H1 (cell line): ENCODE measurements at regions of chr1 and their contacts with region 1.

Region 1: GRCh38 chr1:64136752-64137411 is 66.5 kb upstream of the UBE2U start:
- DNase-seq: peak; percentile 49 to 93
- H3K4me3 ChIP-seq: no peak overlapping the region
- H3K27ac ChIP-seq: no peak overlapping the region
- H3K4me1 ChIP-seq: no peaks in the 10 kb centered on the region
- H3K27me3 ChIP-seq: no peaks in the 10 kb centered on the region
- CTCF ChIP-seq: peak; percentile 57 to 92 (median 72)
- EP300 ChIP-seq: no peak
- POLR2A ChIP-seq: no peak
- RAD21 ChIP-seq: peak; percentile 87 to 90

Region 2: DNA sequence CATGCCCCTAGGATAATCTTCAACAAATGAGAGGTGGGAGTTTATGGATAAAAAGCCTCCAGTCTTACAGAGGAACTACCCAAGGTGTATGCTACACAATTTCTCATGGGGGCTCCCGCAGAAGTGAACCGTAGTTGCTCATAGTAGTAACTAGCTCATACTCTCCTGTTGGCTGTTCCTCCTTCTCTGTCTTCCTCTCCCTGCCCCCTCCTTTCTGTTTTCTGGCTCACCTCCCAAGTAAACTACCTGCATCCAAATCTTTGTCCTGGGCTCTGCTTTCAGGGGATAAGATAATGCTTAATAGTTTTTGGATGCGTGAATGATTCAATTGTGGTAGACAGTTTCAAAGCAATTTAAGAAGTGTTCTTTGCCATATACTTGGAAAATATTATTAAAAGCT is 453.1 kb before region 1 on chr1:
- CTCF ChIA-PET with region 1: interaction called, 14 read pairs
- POLR2A ChIA-PET with region 1: no interaction called
- DNase-seq: no peak
- H3K4me3 ChIP-seq: no peak overlapping the region
- H3K27ac ChIP-seq: no peak overlapping the region
- H3K4me1 ChIP-seq: peaks cover 0 to 4% (median 0%) of the 10 kb centered on the region in 4 experiments; a peak in 3 of 7 replicates
- H3K27me3 ChIP-seq: no peaks in the 10 kb centered on the region
- CTCF ChIP-seq: no peak
- EP300 ChIP-seq: no peak
- POLR2A ChIP-seq: no peak
- RAD21 ChIP-seq: no peak

Region 3: DNA sequence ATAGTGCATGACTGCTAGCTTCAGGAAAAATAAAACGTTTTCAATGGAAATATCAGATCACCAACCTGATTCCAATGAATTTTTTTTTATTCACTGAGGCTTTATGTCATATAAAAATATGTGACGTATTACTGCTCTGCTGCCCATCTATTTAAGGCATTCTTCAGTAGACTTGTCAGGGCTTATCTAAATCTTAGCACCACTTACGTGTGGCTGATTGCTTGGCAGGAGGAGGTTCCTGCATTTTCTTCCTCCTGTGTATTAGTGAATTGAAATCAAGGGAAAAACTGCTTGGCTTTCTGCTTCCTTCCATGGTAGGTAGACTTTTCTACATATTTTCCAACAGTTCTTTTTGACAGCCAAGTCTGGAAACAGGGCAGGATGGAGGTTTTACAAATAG is 282.8 kb before region 1 on chr1:
- CTCF ChIA-PET with region 1: no interaction called
- POLR2A ChIA-PET with region 1: no interaction called
- DNase-seq: no peak
- H3K4me3 ChIP-seq: no peak overlapping the region
- H3K27ac ChIP-seq: 0 out of 2 replicates have a peak overlapping the region, but pooled peaks have one; percentile 2
- H3K4me1 ChIP-seq: peaks cover 3 to 11% (median 8%) of the 10 kb centered on the region in 4 experiments; a peak in 5 of 7 replicates
- H3K27me3 ChIP-seq: no peaks in the 10 kb centered on the region
- CTCF ChIP-seq: no peak
- EP300 ChIP-seq: no peak
- POLR2A ChIP-seq: no peak
- RAD21 ChIP-seq: no peak

Region 4: GRCh38 chr1:63892632-63893395 is 244.1 kb before region 1 on chr1:
- CTCF ChIA-PET with region 1: no interaction called
- POLR2A ChIA-PET with region 1: no interaction called
- DNase-seq: no peak
- H3K4me3 ChIP-seq: no peak overlapping the region
- H3K27ac ChIP-seq: no peak overlapping the region
- H3K4me1 ChIP-seq: peaks cover 0 to 21% (median 4%) of the 10 kb centered on the region in 4 experiments; a peak in 4 of 7 replicates
- H3K27me3 ChIP-seq: no peaks in the 10 kb centered on the region
- CTCF ChIP-seq: no peak
- EP300 ChIP-seq: no peak
- POLR2A ChIP-seq: no peak
- RAD21 ChIP-seq: no peak

Region 5: GRCh38 chr1:64107118-64107519 is 29.8 kb before region 1 on chr1:
- CTCF ChIA-PET with region 1: interaction called, 13 read pairs
- POLR2A ChIA-PET with region 1: no interaction called
- DNase-seq: no peak
- H3K4me3 ChIP-seq: no peak overlapping the region
- H3K27ac ChIP-seq: no peak overlapping the region
- H3K4me1 ChIP-seq: peaks cover 0 to 11% (median 3%) of the 10 kb centered on the region in 4 experiments; a peak in 4 of 7 replicates
- H3K27me3 ChIP-seq: no peaks in the 10 kb centered on the region
- CTCF ChIP-seq: no peak
- EP300 ChIP-seq: no peak
- POLR2A ChIP-seq: no peak
- RAD21 ChIP-seq: no peak

Region 6: GRCh38 chr1:64121766-64122385 is 15.0 kb before region 1 on chr1:
- CTCF ChIA-PET with region 1: interaction called, 20 read pairs
- POLR2A ChIA-PET with region 1: no interaction called
- DNase-seq: no peak
- H3K4me3 ChIP-seq: no peak overlapping the region
- H3K27ac ChIP-seq: no peak overlapping the region
- H3K4me1 ChIP-seq: no peaks in the 10 kb centered on the region
- H3K27me3 ChIP-seq: no peaks in the 10 kb centered on the region
- CTCF ChIP-seq: no peak
- EP300 ChIP-seq: no peak
- POLR2A ChIP-seq: no peak
- RAD21 ChIP-seq: no peak

Region 7: DNA sequence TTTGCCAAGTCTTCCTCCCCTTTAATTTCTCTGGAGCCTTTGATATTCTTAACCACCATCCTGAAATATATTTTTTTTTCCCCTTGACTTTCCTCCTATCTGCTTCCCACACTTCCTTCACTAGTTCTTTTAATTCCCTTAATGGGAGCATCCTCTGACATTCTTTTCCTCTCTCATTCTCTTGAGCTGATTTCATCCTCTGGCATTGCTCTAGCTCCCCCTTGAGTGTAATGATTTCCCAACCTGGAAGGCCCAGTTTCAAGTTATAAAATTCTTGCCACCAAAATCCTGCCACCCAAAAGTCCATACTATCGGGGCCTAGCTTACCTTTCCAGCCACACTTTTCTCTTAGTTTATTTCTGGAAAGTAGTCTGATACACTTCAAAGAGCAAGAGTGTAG is 27.1 kb after region 1 on chr1:
- CTCF ChIA-PET with region 1: interaction called, 26 read pairs
- POLR2A ChIA-PET with region 1: no interaction called
- DNase-seq: no peak
- H3K4me3 ChIP-seq: no peak overlapping the region
- H3K27ac ChIP-seq: no peak overlapping the region
- H3K4me1 ChIP-seq: no peaks in the 10 kb centered on the region
- H3K27me3 ChIP-seq: no peaks in the 10 kb centered on the region
- CTCF ChIP-seq: peak in 2 of 3 experiments; percentile 52 to 62; a peak in 3 of 4 replicates
- EP300 ChIP-seq: no peak
- POLR2A ChIP-seq: no peak
- RAD21 ChIP-seq: peak; percentile 69 to 72

Region 8: DNA sequence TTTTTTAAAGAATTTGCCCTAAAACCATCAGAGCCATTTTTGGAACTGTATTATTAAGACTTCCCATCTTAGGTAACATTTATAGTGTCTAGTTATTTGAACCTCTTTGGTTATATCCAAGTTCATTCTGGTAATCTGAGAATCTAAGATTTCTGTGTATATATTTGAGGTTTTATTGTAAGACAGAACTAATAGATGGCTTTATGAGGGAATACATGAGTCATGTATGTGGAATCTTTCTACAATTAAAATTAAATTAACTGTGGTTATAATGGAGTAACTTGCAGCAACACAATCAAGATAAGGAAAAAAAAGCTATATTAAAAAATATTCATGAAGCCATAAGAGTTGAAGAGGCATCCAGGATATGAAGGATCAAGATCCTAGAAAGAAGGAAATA is 158.7 kb after region 1 on chr1:
- CTCF ChIA-PET with region 1: no interaction called
- POLR2A ChIA-PET with region 1: no interaction called
- DNase-seq: no peak
- H3K4me3 ChIP-seq: no peak overlapping the region
- H3K27ac ChIP-seq: no peak overlapping the region
- H3K4me1 ChIP-seq: no peaks in the 10 kb centered on the region
- H3K27me3 ChIP-seq: no peaks in the 10 kb centered on the region
- CTCF ChIP-seq: no peak
- EP300 ChIP-seq: no peak
- POLR2A ChIP-seq: no peak
- RAD21 ChIP-seq: no peak